T-cell (primary cell): ENCODE measurements at regions of chr13 and their contacts with region 1.

Region 1: GRCh38 chr13:99356158-99357091 is 49.2 kb upstream of the GPR183 start:
- DNase-seq: peak in 32 of 35 experiments; percentile 32 to 93 (median 60)
- ATAC-seq: peak; percentile 51 to 73 (median 55)
- H3K4me3 ChIP-seq: peak overlapping the region in 1 of 2 donors; percentile 28
- H3K4me3 Mint-ChIP-seq: peak overlapping the region; percentile 64 to 73 (median 65)
- H3K27ac ChIP-seq: peak overlapping the region; percentile 100
- H3K27ac Mint-ChIP-seq: peak overlapping the region; percentile 99
- H3K4me1 ChIP-seq: peaks cover 92 to 95% of the 10 kb centered on the region in 2 experiments
- H3K4me1 Mint-ChIP-seq: peaks cover 98 to 100% (median 99%) of the 10 kb centered on the region in 3 donors
- H3K27me3 ChIP-seq: no peaks in the 10 kb centered on the region
- H3K27me3 Mint-ChIP-seq: no peaks in the 10 kb centered on the region

Region 2: GRCh38 chr13:99113351-99113750 is 243.1 kb before region 1 on chr13:
- CTCF ChIA-PET with region 1: no interaction called
- POLR2A ChIA-PET with region 1: no interaction called
- DNase-seq: no peak
- ATAC-seq: no peak
- H3K4me3 ChIP-seq: no peak overlapping the region
- H3K4me3 Mint-ChIP-seq: no peak overlapping the region
- H3K27ac ChIP-seq: no peak overlapping the region
- H3K27ac Mint-ChIP-seq: no peak overlapping the region
- H3K4me1 ChIP-seq: no peaks in the 10 kb centered on the region
- H3K4me1 Mint-ChIP-seq: no peaks in the 10 kb centered on the region
- H3K27me3 ChIP-seq: peaks cover 0 to 3% of the 10 kb centered on the region in 2 experiments
- H3K27me3 Mint-ChIP-seq: no peaks in the 10 kb centered on the region

Region 3: DNA sequence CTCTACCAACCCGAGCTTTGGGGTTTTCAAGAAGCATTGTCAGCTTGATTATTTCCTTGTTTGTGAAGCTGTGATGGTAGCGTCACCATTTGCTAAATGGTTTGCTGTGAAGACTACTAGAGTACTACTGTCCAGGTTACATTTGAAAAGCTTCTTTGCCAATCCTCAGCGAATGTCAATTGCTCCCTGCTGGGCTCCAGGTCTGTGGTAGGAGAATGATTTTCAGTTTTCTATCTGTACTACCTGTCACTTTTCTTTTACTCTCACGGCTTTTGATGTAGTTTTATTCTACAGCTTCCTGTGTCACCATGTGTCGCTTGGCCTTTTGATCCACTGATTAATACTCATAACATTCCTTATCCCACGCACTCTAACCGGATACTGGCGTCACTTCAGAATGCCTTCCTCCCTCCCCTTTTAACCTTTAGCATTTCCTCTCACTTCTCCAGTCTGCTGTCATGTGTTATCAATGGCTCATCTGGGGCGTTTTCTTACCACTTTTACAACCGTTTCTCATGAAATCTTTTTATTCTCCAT is 41.7 kb before region 1 on chr13:
- CTCF ChIA-PET with region 1: interaction called in 1 of 2 experiments, 10 read pairs
- POLR2A ChIA-PET with region 1: interaction called, 4 to 5 read pairs
- DNase-seq: peak in 32 of 35 experiments; percentile 19 to 84 (median 58)
- ATAC-seq: peak; percentile 68 to 86 (median 76)
- H3K4me3 ChIP-seq: peak overlapping the region; percentile 35 to 49
- H3K4me3 Mint-ChIP-seq: peak overlapping the region; percentile 60 to 76 (median 69)
- H3K27ac ChIP-seq: peak overlapping the region; percentile 91
- H3K27ac Mint-ChIP-seq: peak overlapping the region; percentile 95 to 96
- H3K4me1 ChIP-seq: peaks cover 54 to 61% of the 10 kb centered on the region in 2 experiments
- H3K4me1 Mint-ChIP-seq: peaks cover 78 to 85% (median 82%) of the 10 kb centered on the region in 3 donors
- H3K27me3 ChIP-seq: no peaks in the 10 kb centered on the region
- H3K27me3 Mint-ChIP-seq: no peaks in the 10 kb centered on the region

Region 4: DNA sequence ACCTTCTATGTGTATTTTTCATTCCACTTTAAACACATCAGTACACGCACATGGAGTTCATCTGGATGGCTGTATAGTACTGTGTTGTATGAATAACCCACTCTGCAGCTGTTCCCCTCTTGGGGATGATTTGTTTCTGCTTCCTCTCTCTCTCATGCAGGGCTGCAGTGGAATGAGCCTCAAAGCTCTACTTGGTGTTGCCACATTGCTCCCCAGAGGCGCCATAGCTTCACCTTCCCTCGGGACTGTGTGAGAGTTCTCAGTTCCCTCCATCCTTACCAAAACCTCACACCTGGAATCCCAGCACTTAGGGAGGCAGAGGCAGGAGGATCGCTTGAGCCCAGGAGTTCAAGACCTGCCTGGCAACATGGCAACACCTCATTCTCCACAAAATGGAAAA is 20.8 kb before region 1 on chr13:
- CTCF ChIA-PET with region 1: interaction called in 1 of 2 experiments, 17 read pairs
- POLR2A ChIA-PET with region 1: interaction called in 1 of 2 experiments, 11 read pairs
- DNase-seq: no peak
- ATAC-seq: no peak
- H3K4me3 ChIP-seq: no peak overlapping the region
- H3K4me3 Mint-ChIP-seq: no peak overlapping the region
- H3K27ac ChIP-seq: no peak overlapping the region
- H3K27ac Mint-ChIP-seq: peak overlapping the region; percentile 74 to 87
- H3K4me1 ChIP-seq: peaks cover 23 to 24% of the 10 kb centered on the region in 2 experiments
- H3K4me1 Mint-ChIP-seq: peaks cover 71 to 81% (median 78%) of the 10 kb centered on the region in 3 donors
- H3K27me3 ChIP-seq: no peaks in the 10 kb centered on the region
- H3K27me3 Mint-ChIP-seq: no peaks in the 10 kb centered on the region

Region 5: DNA sequence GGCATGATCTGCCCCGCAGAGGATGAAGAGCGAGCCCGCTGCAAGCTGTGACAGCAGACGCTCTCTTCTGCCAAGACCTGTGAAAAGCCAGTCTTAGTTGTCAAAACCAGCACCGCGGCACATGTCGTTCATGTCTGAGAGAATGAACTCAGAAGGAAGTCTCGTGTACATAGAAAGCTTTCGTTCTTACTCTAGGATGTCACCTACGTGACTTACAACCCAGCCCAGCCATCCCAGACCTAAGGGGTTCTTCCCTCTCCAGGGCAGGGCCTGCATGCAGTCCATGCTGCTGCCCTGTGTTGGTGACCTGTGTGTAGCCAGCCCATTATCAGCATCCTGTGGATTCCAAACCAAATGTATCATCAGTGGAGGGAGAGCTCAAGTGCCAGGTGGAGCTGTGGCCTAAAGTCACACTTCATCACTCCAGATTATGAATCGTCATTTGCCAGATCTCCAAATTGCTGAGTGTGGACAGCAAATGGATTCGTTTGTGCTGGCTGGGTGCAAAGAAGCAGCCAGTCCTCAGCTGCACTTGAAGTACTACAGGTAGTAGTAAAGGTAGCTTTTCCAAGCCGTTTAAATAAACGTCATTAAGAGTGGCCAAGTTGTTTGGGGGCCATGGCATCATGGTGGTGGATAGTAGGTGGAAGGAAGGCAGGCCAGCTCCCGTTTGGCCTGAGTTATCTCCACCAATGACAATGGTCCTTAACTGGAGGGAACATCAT is 24.7 kb after region 1 on chr13:
- CTCF ChIA-PET with region 1: interaction called, 6 to 8 read pairs
- POLR2A ChIA-PET with region 1: interaction called, 9 to 14 read pairs
- DNase-seq: peak; percentile 42 to 76 (median 63)
- ATAC-seq: peak; percentile 44 to 72 (median 66)
- H3K4me3 ChIP-seq: no peak overlapping the region
- H3K4me3 Mint-ChIP-seq: peak overlapping the region in 2 of 3 donors; percentile 47 to 75
- H3K27ac ChIP-seq: peak overlapping the region; percentile 81
- H3K27ac Mint-ChIP-seq: peak overlapping the region; percentile 98
- H3K4me1 ChIP-seq: peaks cover 66 to 85% of the 10 kb centered on the region in 2 experiments
- H3K4me1 Mint-ChIP-seq: peaks cover 89 to 96% (median 96%) of the 10 kb centered on the region in 3 donors
- H3K27me3 ChIP-seq: no peaks in the 10 kb centered on the region
- H3K27me3 Mint-ChIP-seq: no peaks in the 10 kb centered on the region

Region 6: GRCh38 chr13:99393791-99394735 is 37.6 kb after region 1 on chr13:
- CTCF ChIA-PET with region 1: no interaction called
- POLR2A ChIA-PET with region 1: no interaction called
- DNase-seq: no peak
- ATAC-seq: no peak
- H3K4me3 ChIP-seq: no peak overlapping the region
- H3K4me3 Mint-ChIP-seq: no peak overlapping the region
- H3K27ac ChIP-seq: no peak overlapping the region
- H3K27ac Mint-ChIP-seq: peak overlapping the region in 1 of 2 donors; percentile 68
- H3K4me1 ChIP-seq: peaks cover 0 to 19% of the 10 kb centered on the region in 2 experiments
- H3K4me1 Mint-ChIP-seq: peaks cover 26 to 40% (median 27%) of the 10 kb centered on the region in 3 donors
- H3K27me3 ChIP-seq: no peaks in the 10 kb centered on the region
- H3K27me3 Mint-ChIP-seq: no peaks in the 10 kb centered on the region

Region 7: DNA sequence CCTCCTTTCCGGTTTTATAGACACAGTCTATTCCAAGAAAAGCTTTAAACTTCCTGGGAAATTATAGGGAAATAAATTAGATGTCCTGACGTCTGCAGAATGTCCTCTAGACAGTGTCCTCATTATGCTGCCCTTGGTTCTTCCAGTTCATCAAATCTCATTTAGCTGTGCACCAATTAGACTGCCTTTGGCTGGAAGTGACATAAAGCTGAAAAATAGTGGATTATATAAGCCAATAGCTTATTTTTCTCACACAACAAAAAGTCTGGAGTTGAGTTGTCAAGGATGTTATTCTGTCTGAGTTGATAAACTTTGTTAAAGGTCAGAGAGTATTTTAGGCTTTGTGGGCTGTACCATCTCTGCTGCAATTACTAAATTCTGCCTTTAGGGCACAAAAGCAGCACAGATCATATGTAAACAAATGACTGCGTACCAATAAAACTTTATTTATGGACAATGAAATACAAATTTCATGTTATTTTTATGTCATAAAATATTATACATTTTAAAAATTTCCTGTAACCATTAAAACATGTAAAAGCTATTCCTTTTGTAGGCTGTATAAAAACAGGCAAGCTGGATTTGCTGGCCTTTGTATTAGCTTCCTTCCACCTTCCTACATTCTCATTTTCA is 1633.1 kb after region 1 on chr13:
- CTCF ChIA-PET with region 1: no interaction called
- POLR2A ChIA-PET with region 1: no interaction called
- DNase-seq: no peak
- ATAC-seq: no peak
- H3K4me3 ChIP-seq: no peak overlapping the region
- H3K4me3 Mint-ChIP-seq: no peak overlapping the region
- H3K27ac ChIP-seq: no peak overlapping the region
- H3K27ac Mint-ChIP-seq: no peak overlapping the region
- H3K4me1 ChIP-seq: no peaks in the 10 kb centered on the region
- H3K4me1 Mint-ChIP-seq: no peaks in the 10 kb centered on the region
- H3K27me3 ChIP-seq: peaks cover 0 to 3% of the 10 kb centered on the region in 2 experiments
- H3K27me3 Mint-ChIP-seq: peaks cover 10 to 15% of the 10 kb centered on the region in 2 donors